PC-3 (cell line): ENCODE measurements at regions of chr5 and their contacts with region 1.

Region 1: GRCh38 chr5:127030259-127031146 is at the start of gene MARCHF3:
- DNase-seq: peak; percentile 97
- ATAC-seq: peak; percentile 91
- H3K4me3 ChIP-seq: peak within 1 kb of the TSS; percentile 91
- H3K27ac ChIP-seq: no peak within 1 kb of the TSS
- H3K4me1 ChIP-seq: peaks cover 19% of the 10 kb centered on the region
- H3K27me3 ChIP-seq: no peaks in the 10 kb centered on the region
- CTCF ChIP-seq: peak; percentile 36; the same call in 1 of the 2 replicates
- total RNA-seq, gene MARCHF3: 1.3 and 2.5 TPM in 2 replicates

Region 2: GRCh38 chr5:126143622-126144021 is 886.9 kb before region 1 on chr5:
- CTCF ChIA-PET with region 1: no interaction called
- POLR2A ChIA-PET with region 1: no interaction called
- intact Hi-C with region 1: no loop called
- DNase-seq: no peak
- ATAC-seq: no peak
- H3K4me3 ChIP-seq: no peak overlapping the region
- H3K27ac ChIP-seq: no peak overlapping the region
- H3K4me1 ChIP-seq: peaks cover 27% of the 10 kb centered on the region
- H3K27me3 ChIP-seq: no peaks in the 10 kb centered on the region
- CTCF ChIP-seq: no peak

Region 3: GRCh38 chr5:126846344-126846743 is 184.2 kb before region 1 on chr5:
- CTCF ChIA-PET with region 1: no interaction called
- POLR2A ChIA-PET with region 1: no interaction called
- intact Hi-C with region 1: loop called (anchors 5 kb)
- DNase-seq: no peak
- ATAC-seq: no peak
- H3K4me3 ChIP-seq: no peak overlapping the region
- H3K27ac ChIP-seq: no peak overlapping the region
- H3K4me1 ChIP-seq: no peaks in the 10 kb centered on the region
- H3K27me3 ChIP-seq: no peaks in the 10 kb centered on the region
- CTCF ChIP-seq: no peak

Region 4: GRCh38 chr5:126869005-126869451 is 161.5 kb before region 1 on chr5:
- CTCF ChIA-PET with region 1: no interaction called
- POLR2A ChIA-PET with region 1: no interaction called
- intact Hi-C with region 1: loop called (anchors 5 kb)
- DNase-seq: no peak
- ATAC-seq: no peak
- H3K4me3 ChIP-seq: no peak overlapping the region
- H3K27ac ChIP-seq: no peak overlapping the region
- H3K4me1 ChIP-seq: no peaks in the 10 kb centered on the region
- H3K27me3 ChIP-seq: no peaks in the 10 kb centered on the region
- CTCF ChIP-seq: no peak

Region 5: DNA sequence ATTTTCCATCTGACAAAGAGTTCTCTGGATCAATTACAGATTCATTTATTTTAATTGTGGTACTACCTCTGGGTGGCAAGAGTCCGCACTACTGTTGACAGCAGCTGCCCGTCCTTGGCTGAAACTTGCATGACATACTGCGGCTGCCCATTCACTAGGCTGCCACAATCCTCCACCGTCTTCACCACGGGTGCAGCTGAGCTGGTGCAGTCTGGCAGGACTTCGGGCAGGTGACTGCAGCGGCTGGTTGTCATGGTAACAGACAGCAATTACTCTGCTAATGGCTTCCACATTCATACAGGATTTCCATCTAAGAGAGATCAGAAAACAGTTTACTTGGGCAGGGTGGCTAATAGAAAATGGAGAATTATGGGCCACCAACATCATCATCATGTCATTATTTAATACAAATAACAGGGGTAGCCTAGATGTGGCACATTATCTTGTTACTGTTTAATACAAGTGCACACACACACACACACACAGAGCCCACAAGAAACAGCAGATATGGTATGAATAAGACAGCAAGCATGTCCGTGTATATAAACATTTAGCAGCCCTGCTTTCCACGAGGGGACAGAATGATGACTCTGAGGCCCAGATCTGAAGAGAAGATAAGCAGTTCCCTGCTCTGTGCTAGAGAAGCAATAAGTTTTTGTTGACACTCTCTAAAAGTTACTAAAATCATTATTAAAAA is 112.4 kb before region 1 on chr5:
- CTCF ChIA-PET with region 1: no interaction called
- POLR2A ChIA-PET with region 1: no interaction called
- intact Hi-C with region 1: loop called (anchors 1 kb)
- DNase-seq: peak; percentile 87
- ATAC-seq: peak; percentile 92
- H3K4me3 ChIP-seq: no peak overlapping the region
- H3K27ac ChIP-seq: peak overlapping the region; percentile 67
- H3K4me1 ChIP-seq: peaks cover 26% of the 10 kb centered on the region
- H3K27me3 ChIP-seq: no peaks in the 10 kb centered on the region
- CTCF ChIP-seq: no peak

Region 6: GRCh38 chr5:126961702-126962101 is 68.8 kb before region 1 on chr5:
- CTCF ChIA-PET with region 1: no interaction called
- POLR2A ChIA-PET with region 1: no interaction called
- intact Hi-C with region 1: loop called (anchors 2 kb)
- DNase-seq: peak; percentile 64
- ATAC-seq: peak; percentile 81
- H3K4me3 ChIP-seq: no peak overlapping the region
- H3K27ac ChIP-seq: no peak overlapping the region
- H3K4me1 ChIP-seq: peaks cover 19% of the 10 kb centered on the region
- H3K27me3 ChIP-seq: no peaks in the 10 kb centered on the region
- CTCF ChIP-seq: no peak

Region 7: DNA sequence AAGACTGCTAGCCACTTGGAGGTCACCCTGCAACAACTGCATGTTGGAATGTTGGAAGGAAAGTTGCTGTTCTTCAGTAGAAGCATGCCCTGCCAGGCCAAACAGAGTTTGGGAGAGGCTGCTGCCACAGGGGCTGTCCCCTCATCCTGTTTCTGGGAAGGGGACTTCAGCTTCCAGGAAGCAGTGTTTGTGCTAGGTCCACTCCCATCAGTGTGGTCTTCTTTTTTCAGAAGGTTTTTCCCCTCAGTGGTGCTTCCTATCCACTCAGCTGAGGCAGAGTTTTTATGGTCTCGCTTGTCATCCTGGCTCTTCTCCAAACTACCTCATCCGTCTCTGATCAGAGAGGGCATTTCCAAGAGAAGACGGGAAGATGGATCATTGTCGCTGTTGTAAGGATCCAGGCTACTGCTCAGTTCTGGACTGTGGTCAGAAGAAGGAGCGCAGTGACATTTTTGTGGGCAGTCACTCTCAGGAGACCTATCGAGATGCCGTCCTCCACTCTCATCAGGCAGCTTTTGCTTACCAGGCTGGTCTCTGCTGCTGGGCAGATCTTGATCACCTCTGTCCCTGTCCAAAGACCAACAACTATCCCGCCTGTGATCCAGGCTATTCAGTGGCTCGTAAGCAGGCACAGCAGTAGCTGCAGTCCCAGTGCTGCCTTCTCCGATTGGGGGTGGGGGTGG is 140.6 kb after region 1 on chr5:
- CTCF ChIA-PET with region 1: no interaction called
- POLR2A ChIA-PET with region 1: no interaction called
- intact Hi-C with region 1: no loop called
- DNase-seq: no peak
- ATAC-seq: no peak
- H3K4me3 ChIP-seq: no peak overlapping the region
- H3K27ac ChIP-seq: no peak overlapping the region
- H3K4me1 ChIP-seq: no peaks in the 10 kb centered on the region
- H3K27me3 ChIP-seq: 0 out of 2 replicates have a peak, but pooled peaks cover 6% of the 10 kb centered on the region
- CTCF ChIP-seq: no peak